AG04450 (cell line): ENCODE measurements at regions of chr10 and their contacts with region 1.

Region 1: DNA sequence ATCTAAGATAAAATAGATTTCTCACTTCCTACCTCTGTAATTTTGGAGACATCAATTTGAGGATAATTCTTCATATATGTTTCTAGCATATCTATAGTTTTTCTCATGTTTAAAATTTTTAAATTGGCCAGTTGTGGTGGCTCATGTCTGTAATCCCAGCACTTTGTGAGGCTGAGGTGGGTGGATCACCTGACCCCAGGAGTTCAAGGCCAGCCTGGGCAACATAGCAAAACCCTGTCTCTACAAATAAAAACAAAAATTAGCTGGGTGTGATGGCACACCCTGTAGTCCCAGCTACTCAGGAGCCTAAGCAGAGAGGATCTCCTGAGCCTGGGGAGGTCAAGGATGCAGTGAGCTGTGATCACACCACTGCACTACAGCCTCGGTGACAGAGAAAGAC is 4.9 kb downstream of the ACBD5 start:
- DNase-seq: no peak
- H3K4me3 ChIP-seq: no peak overlapping the region
- H3K27ac ChIP-seq: no peak overlapping the region
- H3K27me3 ChIP-seq: no peaks in the 10 kb centered on the region
- CTCF ChIP-seq: no peak

Region 2: DNA sequence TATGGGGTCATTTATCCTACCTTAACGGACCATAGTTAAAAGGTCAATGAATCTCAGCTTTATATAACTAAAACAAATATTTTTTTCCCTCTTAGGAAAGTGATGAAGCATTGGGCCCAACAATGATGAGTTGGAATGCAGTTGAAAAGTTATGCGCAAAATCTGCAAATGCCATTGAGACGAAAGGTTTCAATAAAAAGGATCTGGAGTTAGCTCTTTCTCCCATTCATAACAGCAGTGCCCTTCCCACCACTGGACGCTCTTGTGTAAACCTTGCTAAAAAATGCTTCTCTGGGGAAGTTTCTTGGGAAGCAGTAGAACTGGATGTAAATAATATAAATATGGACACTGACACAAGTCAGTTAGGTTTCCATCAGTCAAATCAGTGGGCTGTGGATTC is 65.9 kb before region 1 on chr10:
- CTCF ChIA-PET with region 1: no interaction called
- POLR2A ChIA-PET with region 1: no interaction called
- DNase-seq: no peak
- H3K4me3 ChIP-seq: no peak overlapping the region
- H3K27ac ChIP-seq: no peak overlapping the region
- H3K27me3 ChIP-seq: no peaks in the 10 kb centered on the region
- CTCF ChIP-seq: no peak

Region 3: GRCh38 chr10:27252267-27253000 is 16.7 kb after region 1 on chr10:
- CTCF ChIA-PET with region 1: interaction called, 10 read pairs
- POLR2A ChIA-PET with region 1: interaction called, 3 read pairs
- DNase-seq: no peak
- H3K4me3 ChIP-seq: peak overlapping the region; percentile 61
- H3K27ac ChIP-seq: no peak overlapping the region
- H3K27me3 ChIP-seq: peaks cover 3% of the 10 kb centered on the region
- CTCF ChIP-seq: peak; percentile 26; the same call in 1 of the 2 replicates